H1 (cell line): ENCODE measurements at regions of chr1 and their contacts with region 1.

Region 1: GRCh38 chr1:154870115-154870571 is at the start of gene KCNN3:
- DNase-seq: peak; percentile 84 to 99
- H3K4me3 ChIP-seq: peak within 1 kb of the TSS; percentile 10 to 58 (median 38); a peak in 7 of 8 replicates
- H3K27ac ChIP-seq: no peak within 1 kb of the TSS
- H3K4me1 ChIP-seq: peaks cover 13 to 51% (median 21%) of the 10 kb centered on the region in 4 experiments; a peak in 6 of 7 replicates
- H3K27me3 ChIP-seq: peaks cover 0 to 10% (median 7%) of the 10 kb centered on the region in 4 experiments; a peak in 3 of 7 replicates
- CTCF ChIP-seq: no peak
- EP300 ChIP-seq: no peak
- POLR2A ChIP-seq: peak in 1 of 2 experiments; percentile 79; a peak in 2 of 3 replicates
- RAD21 ChIP-seq: no peak
- total RNA-seq, gene KCNN3: 2.8 and 3.0 TPM in 2 replicates

Region 2: DNA sequence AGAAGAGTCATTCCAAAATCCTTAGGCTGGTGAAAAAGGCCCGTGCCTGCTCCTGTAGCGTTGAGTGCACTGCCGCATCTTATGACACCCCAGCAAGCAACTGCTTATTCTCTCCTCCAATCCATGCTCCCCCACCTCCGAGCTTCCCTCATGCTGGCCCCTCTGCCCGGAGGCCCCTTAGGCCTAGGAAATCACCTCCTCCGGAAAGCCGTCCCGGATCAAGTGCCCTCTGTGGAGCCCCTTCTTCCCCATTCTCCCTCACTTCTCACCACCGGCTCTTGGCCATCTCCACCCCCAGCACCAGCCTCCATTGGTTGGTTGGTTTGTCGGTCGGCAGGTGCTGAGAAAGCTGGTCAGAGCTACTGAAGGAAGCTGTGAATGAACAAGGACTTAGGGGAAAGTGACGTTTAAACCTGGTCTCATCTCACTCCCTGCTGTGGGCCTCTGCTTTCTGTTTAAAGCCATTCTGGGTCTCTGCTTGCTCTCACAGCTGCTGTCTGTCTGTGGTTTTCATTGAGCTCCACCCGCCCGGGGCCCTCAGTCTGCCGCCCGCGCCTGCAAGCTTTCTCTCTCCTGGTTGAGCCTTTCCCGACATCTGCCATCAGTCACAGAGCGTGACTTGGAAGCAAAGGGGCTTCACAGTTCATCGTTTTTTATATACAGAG is 122.3 kb before region 1 on chr1:
- CTCF ChIA-PET with region 1: interaction called, 10 read pairs
- POLR2A ChIA-PET with region 1: no interaction called
- DNase-seq: no peak
- H3K4me3 ChIP-seq: no peak overlapping the region
- H3K27ac ChIP-seq: no peak overlapping the region
- H3K4me1 ChIP-seq: peaks cover 0 to 27% (median 11%) of the 10 kb centered on the region in 4 experiments; a peak in 6 of 7 replicates
- H3K27me3 ChIP-seq: no peaks in the 10 kb centered on the region
- CTCF ChIP-seq: no peak
- EP300 ChIP-seq: no peak
- POLR2A ChIP-seq: no peak
- RAD21 ChIP-seq: no peak

Region 3: GRCh38 chr1:154772606-154773506 is 97.3 kb before region 1 on chr1:
- CTCF ChIA-PET with region 1: interaction called, 16 read pairs
- POLR2A ChIA-PET with region 1: no interaction called
- DNase-seq: peak; percentile 17 to 69
- H3K4me3 ChIP-seq: no peak overlapping the region
- H3K27ac ChIP-seq: no peak overlapping the region
- H3K4me1 ChIP-seq: peaks cover 0 to 11% (median 8%) of the 10 kb centered on the region in 4 experiments; a peak in 6 of 7 replicates
- H3K27me3 ChIP-seq: no peaks in the 10 kb centered on the region
- CTCF ChIP-seq: peak; percentile 55 to 65 (median 60)
- EP300 ChIP-seq: no peak
- POLR2A ChIP-seq: no peak
- RAD21 ChIP-seq: peak; percentile 76 to 82

Region 4: DNA sequence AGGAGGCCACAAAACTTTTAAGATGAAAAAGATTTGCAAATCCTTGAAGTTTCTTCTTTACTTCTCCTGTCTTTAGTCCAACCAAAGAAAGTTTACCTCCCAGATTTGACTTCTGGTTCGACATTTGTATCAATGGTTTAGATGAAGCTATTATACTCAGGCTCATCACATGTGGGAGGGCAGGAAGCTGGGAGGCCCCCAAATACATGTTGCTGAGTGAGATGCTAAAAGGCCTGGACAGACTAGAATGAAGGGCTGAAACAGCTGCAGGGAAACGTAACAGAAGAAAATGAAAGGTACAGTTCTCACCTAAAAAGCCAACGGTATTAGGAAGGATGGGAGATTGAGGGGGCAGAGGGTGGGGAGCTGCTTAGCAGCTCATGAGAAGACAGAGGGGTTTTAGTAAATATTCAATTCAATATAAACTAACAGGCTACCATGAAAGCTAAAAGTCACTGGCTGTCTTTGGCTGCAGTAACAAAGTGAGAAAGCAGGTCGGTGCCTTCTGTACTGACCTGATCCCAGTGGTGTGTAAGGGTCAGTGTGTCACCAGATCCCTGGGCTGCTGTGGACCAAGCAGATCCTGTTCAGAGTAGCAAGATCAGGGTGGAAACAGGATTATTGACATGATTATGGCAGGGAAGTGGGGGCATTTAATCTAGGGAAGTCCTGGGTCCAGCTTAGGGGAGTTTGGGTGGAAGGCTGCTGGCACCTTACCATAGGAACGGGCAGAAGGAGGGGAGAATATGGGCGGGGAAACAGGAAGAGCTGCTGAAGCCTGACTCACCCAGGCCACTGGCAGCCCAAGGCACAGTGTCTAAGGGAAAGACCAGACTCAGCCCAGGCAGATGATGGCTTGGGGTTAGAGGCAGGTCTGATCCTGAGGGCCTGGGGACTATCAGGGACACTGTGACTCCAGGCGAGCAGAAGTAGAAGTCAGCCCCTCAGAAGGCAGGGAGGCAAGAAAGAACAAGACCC is 60.4 kb before region 1 on chr1:
- CTCF ChIA-PET with region 1: interaction called, 13 read pairs
- POLR2A ChIA-PET with region 1: no interaction called
- DNase-seq: no peak
- H3K4me3 ChIP-seq: no peak overlapping the region
- H3K27ac ChIP-seq: no peak overlapping the region
- H3K4me1 ChIP-seq: peaks cover 0 to 20% (median 15%) of the 10 kb centered on the region in 4 experiments; a peak in 5 of 7 replicates
- H3K27me3 ChIP-seq: 0 out of 7 replicates have a peak, but pooled peaks cover 0 to 2% (median 0%) of the 10 kb centered on the region in 4 experiments
- CTCF ChIP-seq: no peak
- EP300 ChIP-seq: no peak
- POLR2A ChIP-seq: no peak
- RAD21 ChIP-seq: no peak

Region 5: DNA sequence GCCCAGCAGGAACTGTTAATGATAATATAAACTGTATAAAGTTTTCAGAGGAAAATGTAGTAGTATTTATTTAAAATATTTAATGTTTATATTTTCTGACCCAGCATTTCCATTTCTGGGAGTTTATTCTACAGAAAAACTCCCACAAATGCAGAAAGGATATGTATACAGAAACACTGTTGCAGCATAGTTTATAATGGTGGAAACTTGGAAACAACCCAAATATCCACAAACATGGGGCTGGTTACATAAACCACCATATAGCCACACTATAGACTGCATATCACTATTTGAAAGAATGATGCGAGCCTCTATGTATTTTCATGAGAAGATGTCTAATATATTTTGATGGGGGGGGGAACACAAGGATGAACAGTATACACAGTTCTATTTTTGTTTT is 31.4 kb after region 1 on chr1:
- CTCF ChIA-PET with region 1: no interaction called
- POLR2A ChIA-PET with region 1: no interaction called
- DNase-seq: no peak
- H3K4me3 ChIP-seq: no peak overlapping the region
- H3K27ac ChIP-seq: no peak overlapping the region
- H3K4me1 ChIP-seq: no peaks in the 10 kb centered on the region; a peak in 1 of 7 replicates
- H3K27me3 ChIP-seq: no peaks in the 10 kb centered on the region
- CTCF ChIP-seq: no peak
- EP300 ChIP-seq: no peak
- POLR2A ChIP-seq: no peak
- RAD21 ChIP-seq: no peak

Region 6: GRCh38 chr1:154925335-154926170 is 55.4 kb after region 1 on chr1:
- CTCF ChIA-PET with region 1: no interaction called
- POLR2A ChIA-PET with region 1: no interaction called
- DNase-seq: no peak
- H3K4me3 ChIP-seq: no peak overlapping the region
- H3K27ac ChIP-seq: no peak overlapping the region
- H3K4me1 ChIP-seq: no peaks in the 10 kb centered on the region
- H3K27me3 ChIP-seq: no peaks in the 10 kb centered on the region
- CTCF ChIP-seq: no peak
- EP300 ChIP-seq: no peak
- POLR2A ChIP-seq: no peak
- RAD21 ChIP-seq: no peak